ENCODE measurements at regions of chr19 and their contacts with region 1.

Region 1: DNA sequence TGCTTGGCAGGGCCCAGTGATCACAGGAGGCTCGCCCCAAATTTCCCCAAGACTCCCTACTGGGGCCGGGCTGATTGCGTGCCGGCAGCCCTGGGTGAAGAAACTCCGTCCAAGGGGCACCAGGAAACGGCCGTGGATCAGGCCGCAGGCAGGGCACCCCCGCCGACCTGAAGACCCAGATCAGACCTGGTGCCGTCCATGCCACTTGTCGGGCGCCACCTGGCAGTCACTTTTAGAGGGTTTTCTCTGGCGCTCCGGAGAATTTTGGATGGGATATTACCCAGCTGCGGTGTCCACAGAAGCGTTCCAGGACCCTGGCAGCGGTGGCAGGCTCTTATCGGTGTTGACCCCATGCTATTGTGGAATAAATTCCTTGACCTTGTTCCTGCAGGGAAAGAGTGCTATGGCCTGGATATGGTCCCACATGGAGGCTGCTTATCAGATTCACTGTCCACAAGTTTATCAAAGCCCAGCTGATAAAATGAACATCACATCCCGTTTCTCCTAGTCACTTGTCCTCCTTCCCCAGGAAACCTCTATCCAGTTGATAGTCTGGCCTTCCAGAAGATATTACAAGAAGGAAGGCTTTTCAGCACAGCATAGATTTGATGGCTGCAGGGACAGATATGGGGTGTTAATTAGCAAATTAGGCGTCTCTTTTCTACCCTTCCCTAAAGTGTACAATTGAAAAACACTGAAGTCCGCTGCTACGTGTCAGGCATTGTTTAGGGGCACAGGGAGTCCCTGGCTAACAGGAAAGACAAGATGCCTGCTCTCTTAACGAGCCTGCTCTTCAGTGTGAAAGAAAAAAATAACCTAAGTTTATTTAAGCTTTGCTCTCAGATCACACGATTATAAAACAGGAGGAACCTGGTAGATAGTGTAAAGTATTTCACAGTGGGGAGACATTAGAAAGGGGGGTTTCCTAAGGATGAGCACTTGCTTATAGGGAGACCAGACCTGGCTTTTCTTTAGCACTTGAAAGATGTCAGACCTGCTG is 38.4 kb downstream of the IGFL2 start:
- DNase-seq: peak in 2 of 7 donors; percentile 36 to 46
- H3K4me3 ChIP-seq: no peak overlapping the region
- H3K27ac ChIP-seq: no peak overlapping the region
- H3K4me1 ChIP-seq: no peaks in the 10 kb centered on the region
- H3K27me3 ChIP-seq: peaks cover 4% of the 10 kb centered on the region
- CTCF ChIP-seq: no peak
- POLR2A ChIP-seq: no peak

Region 2: GRCh38 chr19:46030812-46031550 is 155.4 kb before region 1 on chr19:
- intact Hi-C with region 1: loop called in 1 of 2 experiments (anchors 5 kb)
- DNase-seq: no peak
- H3K4me3 ChIP-seq: no peak overlapping the region
- H3K27ac ChIP-seq: no peak overlapping the region
- H3K4me1 ChIP-seq: no peaks in the 10 kb centered on the region
- H3K27me3 ChIP-seq: no peaks in the 10 kb centered on the region
- CTCF ChIP-seq: no peak
- POLR2A ChIP-seq: no peak

Region 3: DNA sequence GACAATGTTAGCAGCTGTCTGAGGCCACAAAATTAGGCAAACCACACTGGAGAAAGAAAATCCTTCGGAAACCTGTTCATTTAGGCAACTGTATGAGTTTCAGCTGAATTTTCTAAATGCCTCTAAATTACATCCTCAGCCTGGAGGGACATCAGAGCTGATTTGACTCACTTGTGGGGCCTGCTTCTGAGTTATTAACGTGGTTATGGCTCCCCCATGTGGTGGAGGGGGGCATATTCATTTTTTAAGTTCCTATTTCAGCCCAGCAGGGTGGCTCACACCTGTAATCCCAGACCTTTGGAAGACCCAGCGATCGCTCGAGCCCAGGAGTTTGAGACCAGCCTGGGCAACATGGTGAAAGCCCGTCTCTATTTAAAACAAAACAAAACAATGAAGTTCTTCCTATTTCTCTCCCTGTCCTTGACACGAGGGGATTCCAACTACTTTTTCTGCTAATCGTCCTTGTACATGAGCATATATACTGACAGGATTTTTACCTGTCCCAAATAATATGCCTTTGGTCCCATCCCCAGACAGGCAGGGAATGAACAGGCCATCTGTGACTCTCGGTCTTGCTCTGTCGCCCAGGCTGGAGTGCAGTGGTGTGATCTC is 78.9 kb after region 1 on chr19:
- intact Hi-C with region 1: loop called in 1 of 2 experiments (anchors 5 kb)
- DNase-seq: peak; percentile 66 to 86 (median 72)
- H3K4me3 ChIP-seq: no peak overlapping the region
- H3K27ac ChIP-seq: no peak overlapping the region
- H3K4me1 ChIP-seq: no peaks in the 10 kb centered on the region
- H3K27me3 ChIP-seq: peaks cover 13% of the 10 kb centered on the region
- CTCF ChIP-seq: peak; percentile 75 to 98 (median 94)
- POLR2A ChIP-seq: no peak

Region 4: GRCh38 chr19:46371371-46371901 is 185.0 kb after region 1 on chr19:
- intact Hi-C with region 1: no loop called
- DNase-seq: peak in 4 of 7 donors; percentile 26 to 54 (median 30)
- H3K4me3 ChIP-seq: no peak overlapping the region
- H3K27ac ChIP-seq: peak overlapping the region in 2 of 5 donors; percentile 3 to 47
- H3K4me1 ChIP-seq: peaks cover 12 to 30% of the 10 kb centered on the region in 2 donors
- H3K27me3 ChIP-seq: no peaks in the 10 kb centered on the region
- CTCF ChIP-seq: no peak
- POLR2A ChIP-seq: no peak